ENCODE measurements at regions of chr1 and their contacts with region 1.

Region 1: GRCh38 chr1:1406817-1407635 is at the start of gene MRPL20:
- DNase-seq: peak; percentile 87
- ATAC-seq: peak; percentile 93
- H3K4me3 ChIP-seq: peak within 1 kb of the TSS; percentile 81 to 89 (median 87)
- H3K27ac ChIP-seq: peak within 1 kb of the TSS; percentile 91
- H3K4me1 ChIP-seq: peaks cover 50% of the 10 kb centered on the region
- H3K27me3 ChIP-seq: no peaks in the 10 kb centered on the region
- CTCF ChIP-seq: peak; percentile 28; the same call in 1 of the 2 replicates
- EP300 ChIP-seq: peak in 1 of 2 experiments; percentile 40; a peak in 1 of 4 replicates
- POLR2A ChIP-seq: peak in 1 of 2 experiments; percentile 87; a peak in 2 of 4 replicates
- RAD21 ChIP-seq: peak; percentile 42; the same call in 1 of the 2 replicates
- total RNA-seq, gene MRPL20: 127 and 175 TPM in 2 replicates

Region 2: GRCh38 chr1:1419642-1420384 is 12.8 kb after region 1 on chr1:
- CTCF ChIA-PET with region 1: no interaction called
- POLR2A ChIA-PET with region 1: interaction called, 28 read pairs
- in situ Hi-C with region 1: no loop called
- intact Hi-C with region 1: no loop called
- DNase-seq: no peak
- ATAC-seq: peak; percentile 12; the same call in 1 of the 3 replicates
- H3K4me3 ChIP-seq: peak overlapping the region; percentile 37 to 74 (median 70); a peak in 5 of 6 replicates
- H3K27ac ChIP-seq: peak overlapping the region; percentile 44
- H3K4me1 ChIP-seq: peaks cover 67% of the 10 kb centered on the region
- H3K27me3 ChIP-seq: no peaks in the 10 kb centered on the region; a peak in 1 of 5 replicates
- CTCF ChIP-seq: no peak
- EP300 ChIP-seq: no peak
- POLR2A ChIP-seq: no peak
- RAD21 ChIP-seq: no peak

Region 3: GRCh38 chr1:1427106-1427819 is 20.2 kb after region 1 on chr1:
- CTCF ChIA-PET with region 1: no interaction called
- POLR2A ChIA-PET with region 1: interaction called, 355 read pairs
- in situ Hi-C with region 1: no loop called
- intact Hi-C with region 1: no loop called
- DNase-seq: peak; percentile 35
- ATAC-seq: no peak
- H3K4me3 ChIP-seq: peak overlapping the region; percentile 58 to 83 (median 59); a peak in 3 of 6 replicates
- H3K27ac ChIP-seq: no peak overlapping the region
- H3K4me1 ChIP-seq: peaks cover 55% of the 10 kb centered on the region
- H3K27me3 ChIP-seq: no peaks in the 10 kb centered on the region
- CTCF ChIP-seq: no peak
- EP300 ChIP-seq: no peak
- POLR2A ChIP-seq: no peak
- RAD21 ChIP-seq: no peak

Region 4: DNA sequence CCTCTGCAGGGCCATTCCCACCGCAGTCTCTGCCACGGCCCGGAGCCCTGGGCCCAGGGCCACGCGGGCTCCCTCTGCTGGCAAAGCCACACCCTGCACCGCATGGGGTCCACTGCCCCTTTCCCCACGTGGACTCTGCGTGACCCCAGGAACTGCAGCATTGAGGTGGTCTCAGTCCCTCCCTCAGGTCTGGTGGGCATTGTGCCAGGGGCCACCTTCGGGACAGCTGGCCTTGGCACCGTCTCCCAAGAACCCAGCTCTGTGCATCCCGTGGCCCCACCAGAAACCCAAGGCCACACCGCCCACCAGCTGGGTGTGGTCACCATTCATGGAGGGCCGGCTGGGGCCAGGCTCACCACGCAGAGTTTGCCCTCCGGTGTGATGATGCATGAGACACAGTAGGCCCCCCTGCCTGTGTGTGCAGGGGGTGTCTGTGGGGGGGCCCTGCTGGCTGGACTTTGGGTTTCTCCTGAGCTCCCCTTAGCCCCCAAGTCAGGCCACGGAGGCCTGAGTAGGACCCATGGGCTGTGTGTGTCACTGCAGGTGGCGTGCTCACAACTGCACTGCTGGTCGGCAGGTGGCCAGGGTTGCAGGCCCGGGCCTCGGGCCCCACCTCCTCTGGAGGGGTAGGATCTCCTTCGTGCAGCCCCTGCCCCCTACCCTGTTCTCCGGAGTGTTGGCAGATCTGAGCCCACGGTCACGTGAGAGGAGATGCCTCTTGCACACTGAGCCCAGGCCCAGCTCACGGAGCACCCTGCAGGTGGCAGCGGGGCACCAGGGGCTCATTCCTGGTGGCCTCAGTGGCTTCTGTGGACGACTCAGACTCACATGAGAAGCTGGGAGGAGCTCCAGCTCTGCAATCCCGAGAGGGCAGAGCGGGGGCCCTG is 34.2 kb after region 1 on chr1:
- CTCF ChIA-PET with region 1: interaction called, 3 read pairs
- POLR2A ChIA-PET with region 1: interaction called, 355 read pairs
- in situ Hi-C with region 1: loop called (anchors 5 kb)
- intact Hi-C with region 1: loop called (anchors 5 kb)
- DNase-seq: peak; percentile 41
- ATAC-seq: peak; percentile 60
- H3K4me3 ChIP-seq: peak overlapping the region in 2 of 3 experiments; percentile 13 to 66; a peak in 2 of 6 replicates
- H3K27ac ChIP-seq: no peak overlapping the region
- H3K4me1 ChIP-seq: peaks cover 56% of the 10 kb centered on the region
- H3K27me3 ChIP-seq: no peaks in the 10 kb centered on the region
- CTCF ChIP-seq: peak; percentile 96
- EP300 ChIP-seq: no peak
- POLR2A ChIP-seq: no peak
- RAD21 ChIP-seq: peak; percentile 93